ENCODE measurements at regions of chr2 and their contacts with region 1.

Region 1: GRCh38 chr2:9423100-9423921 is at the starts of genes CPSF3 and ITGB1BP1:
- DNase-seq: peak; percentile 98
- ATAC-seq: peak; percentile 89
- H3K4me3 Mint-ChIP-seq: no peak within 1 kb of the TSS
- H3K27ac Mint-ChIP-seq: peak within 1 kb of the TSS; percentile 91
- H3K4me1 Mint-ChIP-seq: peaks cover 32% of the 10 kb centered on the region
- H3K27me3 Mint-ChIP-seq: no peaks in the 10 kb centered on the region
- total RNA-seq, gene CPSF3: 54.1 to 55.2 TPM
- total RNA-seq, gene ITGB1BP1: 170 to 177 TPM

Region 2: DNA sequence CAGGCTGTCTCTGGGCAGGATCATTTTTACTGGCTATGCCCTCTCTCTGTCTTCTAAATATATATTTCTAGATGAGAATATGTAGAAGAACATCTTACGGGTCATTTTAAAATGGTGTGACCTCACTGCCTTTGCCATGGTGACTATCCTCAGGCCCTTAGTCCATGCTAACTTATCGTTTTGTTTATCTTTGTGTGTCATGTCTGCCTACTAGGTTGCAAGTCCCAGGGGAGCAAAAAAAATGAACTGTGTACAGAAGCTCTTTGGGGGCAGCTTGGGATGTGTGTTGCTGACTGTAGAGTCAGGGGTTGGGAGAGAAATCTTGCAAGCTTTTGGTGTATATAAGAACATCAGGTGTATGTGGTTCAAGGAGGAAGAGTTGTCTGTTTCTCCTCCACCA is 11.2 kb after region 1 on chr2:
- CTCF ChIA-PET with region 1: no interaction called
- POLR2A ChIA-PET with region 1: interaction called, 11 read pairs
- DNase-seq: no peak
- ATAC-seq: no peak
- H3K4me3 Mint-ChIP-seq: no peak overlapping the region
- H3K27ac Mint-ChIP-seq: no peak overlapping the region
- H3K4me1 Mint-ChIP-seq: peaks cover 13% of the 10 kb centered on the region
- H3K27me3 Mint-ChIP-seq: no peaks in the 10 kb centered on the region

Region 3: DNA sequence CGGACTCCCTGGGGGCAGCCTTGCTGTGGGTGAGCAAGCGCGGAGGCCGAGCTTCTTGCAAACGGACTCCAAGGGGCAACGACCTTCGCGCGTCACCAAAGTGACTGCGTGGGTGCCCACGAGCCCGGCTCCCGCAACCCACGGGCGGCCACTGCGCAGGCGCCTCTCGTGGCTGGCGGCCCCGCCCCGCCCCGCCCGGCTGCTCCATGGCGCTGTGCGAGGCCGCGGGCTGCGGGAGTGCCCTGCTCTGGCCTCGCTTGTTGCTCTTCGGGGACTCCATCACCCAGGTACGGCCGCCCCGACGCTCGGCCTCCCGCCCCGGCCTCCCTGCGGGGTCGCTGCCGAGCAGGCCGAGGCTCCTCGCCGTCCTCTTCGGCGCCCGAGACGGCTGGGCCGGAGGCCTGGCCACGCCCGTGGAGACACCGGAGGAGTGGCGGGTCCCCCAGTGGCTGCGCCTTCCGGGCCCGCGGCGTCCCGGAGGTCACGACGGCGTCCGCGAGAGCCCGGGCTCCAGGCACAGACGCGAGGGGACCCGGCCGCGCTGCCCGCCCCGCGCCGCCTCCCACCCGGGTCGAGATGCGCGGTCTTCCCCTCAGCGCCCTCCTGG is 51.2 kb after region 1 on chr2 and contains the start of gene IAH1:
- CTCF ChIA-PET with region 1: interaction called, 4 read pairs
- POLR2A ChIA-PET with region 1: interaction called, 20 read pairs
- DNase-seq: peak; percentile 75
- ATAC-seq: peak; percentile 90
- H3K4me3 Mint-ChIP-seq: peak within 1 kb of the TSS; percentile 79
- H3K27ac Mint-ChIP-seq: peak within 1 kb of the TSS; percentile 86
- H3K4me1 Mint-ChIP-seq: peaks cover 41% of the 10 kb centered on the region
- H3K27me3 Mint-ChIP-seq: no peaks in the 10 kb centered on the region
- total RNA-seq, gene IAH1: 71.7 to 73.3 TPM